Activated CD4-positive, alpha-beta memory T cell treated with anti-CD3 and anti-CD28 coated beads for 36 hours (primary cell): ENCODE measurements at regions of chr10 and their contacts with region 1.

Region 1: GRCh38 chr10:35126530-35127296 is at the start of gene CREM:
- DNase-seq: peak; percentile 100
- H3K4me3 Mint-ChIP-seq: peak within 1 kb of the TSS; percentile 86
- H3K27ac Mint-ChIP-seq: peak within 1 kb of the TSS; percentile 95
- H3K4me1 Mint-ChIP-seq: peaks cover 53% of the 10 kb centered on the region
- H3K27me3 Mint-ChIP-seq: no peaks in the 10 kb centered on the region
- total RNA-seq, gene CREM: 160 to 164 TPM

Region 2: GRCh38 chr10:35090162-35090954 is 36.4 kb before region 1 on chr10 and contains the start of gene CUL2:
- CTCF ChIA-PET with region 1: interaction called, 3 read pairs
- POLR2A ChIA-PET with region 1: interaction called, 4 read pairs
- intact Hi-C with region 1: loop called (anchors 1 kb)
- DNase-seq: peak; percentile 94
- H3K4me3 Mint-ChIP-seq: peak within 1 kb of the TSS; percentile 95
- H3K27ac Mint-ChIP-seq: peak within 1 kb of the TSS; percentile 94
- H3K4me1 Mint-ChIP-seq: peaks cover 50% of the 10 kb centered on the region
- H3K27me3 Mint-ChIP-seq: no peaks in the 10 kb centered on the region
- total RNA-seq, gene CUL2: 39.7 to 43.3 TPM

Region 3: GRCh38 chr10:35109141-35109540 is 17.6 kb before region 1 on chr10:
- CTCF ChIA-PET with region 1: no interaction called
- POLR2A ChIA-PET with region 1: no interaction called
- intact Hi-C with region 1: no loop called
- DNase-seq: no peak
- H3K4me3 Mint-ChIP-seq: no peak overlapping the region
- H3K27ac Mint-ChIP-seq: no peak overlapping the region
- H3K4me1 Mint-ChIP-seq: no peaks in the 10 kb centered on the region
- H3K27me3 Mint-ChIP-seq: no peaks in the 10 kb centered on the region

Region 4: DNA sequence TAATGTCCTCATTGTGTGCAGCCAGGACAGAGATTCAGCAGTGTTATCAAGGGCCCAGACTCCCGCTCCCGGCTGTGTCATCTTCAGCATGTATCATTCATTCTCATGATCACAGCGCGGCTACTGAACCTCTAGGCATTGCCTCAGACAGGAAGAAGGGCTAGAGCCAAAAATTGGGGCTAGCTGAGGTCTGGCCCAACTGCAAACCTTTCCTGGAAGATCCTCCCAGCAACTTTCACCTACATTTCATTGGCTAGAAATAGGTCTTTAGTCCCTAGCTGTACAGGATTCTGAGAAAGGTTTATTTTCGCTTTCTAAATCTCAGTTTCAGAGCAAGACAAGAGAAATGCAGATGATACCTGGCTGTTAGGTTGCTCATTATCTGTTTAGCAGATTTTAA is 81.8 kb after region 1 on chr10:
- CTCF ChIA-PET with region 1: interaction called, 5 read pairs
- POLR2A ChIA-PET with region 1: interaction called, 13 read pairs
- intact Hi-C with region 1: loop called (anchors 1 kb)
- DNase-seq: peak; percentile 79
- H3K4me3 Mint-ChIP-seq: peak overlapping the region; percentile 33
- H3K27ac Mint-ChIP-seq: peak overlapping the region; percentile 80
- H3K4me1 Mint-ChIP-seq: peaks cover 24% of the 10 kb centered on the region
- H3K27me3 Mint-ChIP-seq: no peaks in the 10 kb centered on the region

Region 5: DNA sequence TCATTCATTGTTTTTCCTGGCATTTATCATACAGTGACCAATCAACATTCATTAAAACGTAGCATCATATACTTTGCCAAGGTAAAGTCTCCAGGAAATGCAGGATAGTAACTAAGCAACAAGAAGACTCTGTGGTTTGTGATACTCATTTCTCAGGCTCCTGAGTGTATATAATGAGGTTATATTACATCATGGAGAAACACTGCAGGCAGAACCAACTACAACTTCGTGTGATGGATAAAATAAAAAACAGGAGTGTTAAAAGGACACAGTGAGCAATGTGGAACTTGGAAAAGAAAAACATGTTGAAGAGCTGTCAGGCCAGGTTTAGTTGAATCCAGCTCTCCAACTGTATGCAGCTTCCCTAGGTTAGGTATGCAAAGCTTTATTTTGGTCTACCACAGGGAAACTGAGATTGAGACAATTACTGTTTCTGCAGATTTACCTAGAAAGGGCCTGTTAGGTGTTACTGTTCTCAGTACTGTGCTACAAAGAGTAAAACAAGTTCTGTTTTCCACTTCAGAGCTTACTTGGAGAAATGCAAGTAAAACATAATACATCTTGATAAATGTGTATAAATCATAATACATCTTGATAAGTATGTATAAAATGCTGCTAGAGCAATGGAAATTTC is 201.8 kb after region 1 on chr10:
- CTCF ChIA-PET with region 1: interaction called, 3 read pairs
- POLR2A ChIA-PET with region 1: no interaction called
- intact Hi-C with region 1: loop called (anchors 2 kb)
- DNase-seq: no peak
- H3K4me3 Mint-ChIP-seq: no peak overlapping the region
- H3K27ac Mint-ChIP-seq: peak overlapping the region; percentile 51
- H3K4me1 Mint-ChIP-seq: peaks cover 47% of the 10 kb centered on the region
- H3K27me3 Mint-ChIP-seq: no peaks in the 10 kb centered on the region

Region 6: DNA sequence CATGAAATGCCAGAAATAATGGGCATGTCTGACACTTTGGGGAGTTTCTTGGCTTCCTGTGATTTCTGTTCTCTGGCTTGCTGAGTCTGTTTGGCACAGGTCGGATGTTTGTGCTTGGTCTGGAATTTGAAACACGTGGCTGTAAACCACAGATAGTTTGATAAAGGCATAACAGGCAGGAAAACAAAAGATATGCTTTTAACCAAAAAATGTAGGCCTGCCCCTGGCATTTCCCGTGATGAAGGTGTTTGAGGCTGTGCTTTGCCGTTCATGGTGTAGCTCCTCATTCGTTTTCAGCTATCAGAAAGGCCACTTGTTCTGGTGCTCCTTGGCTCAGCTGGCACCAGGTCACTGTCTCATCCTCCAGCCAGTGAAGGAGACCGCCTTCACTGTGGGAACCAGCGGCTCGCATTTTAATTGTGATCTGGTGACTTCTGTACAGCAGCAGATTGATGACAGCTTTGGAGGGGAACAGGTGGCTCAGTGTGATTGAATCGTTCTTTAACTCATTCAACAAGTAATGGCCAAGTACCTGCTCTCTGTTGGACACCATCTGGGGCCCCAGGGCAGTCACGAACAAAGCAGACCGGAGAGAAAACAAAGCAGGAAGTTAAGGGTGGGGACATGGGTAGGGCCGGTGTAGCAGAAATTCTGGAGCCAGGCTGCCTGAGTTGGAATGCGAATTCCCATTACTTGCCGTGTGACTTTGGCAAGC is 321.1 kb after region 1 on chr10:
- CTCF ChIA-PET with region 1: no interaction called
- POLR2A ChIA-PET with region 1: no interaction called
- intact Hi-C with region 1: loop called (anchors 10 kb)
- DNase-seq: peak; percentile 27
- H3K4me3 Mint-ChIP-seq: peak overlapping the region; percentile 45
- H3K27ac Mint-ChIP-seq: peak overlapping the region; percentile 62
- H3K4me1 Mint-ChIP-seq: peaks cover 76% of the 10 kb centered on the region
- H3K27me3 Mint-ChIP-seq: no peaks in the 10 kb centered on the region

Region 7: GRCh38 chr10:35642027-35642792 is 515.5 kb after region 1 on chr10 and contains the start of gene FZD8:
- CTCF ChIA-PET with region 1: no interaction called
- POLR2A ChIA-PET with region 1: no interaction called
- intact Hi-C with region 1: loop called (anchors 2 kb)
- DNase-seq: peak; percentile 83
- H3K4me3 Mint-ChIP-seq: peak within 1 kb of the TSS; percentile 78
- H3K27ac Mint-ChIP-seq: no peak within 1 kb of the TSS
- H3K4me1 Mint-ChIP-seq: peaks cover 27% of the 10 kb centered on the region
- H3K27me3 Mint-ChIP-seq: peaks cover 34% of the 10 kb centered on the region
- total RNA-seq, gene FZD8: 0.31 to 0.45 TPM